Dendritic cell treated with granulocyte-macrophage colony-stimulating factor and Interleukin-4, amounts not matched to agents 40 ng/mL and 50 ng/mL, for 4 days (primary cell): ENCODE measurements at regions of chr3 and their contacts with region 1.

Region 1: DNA sequence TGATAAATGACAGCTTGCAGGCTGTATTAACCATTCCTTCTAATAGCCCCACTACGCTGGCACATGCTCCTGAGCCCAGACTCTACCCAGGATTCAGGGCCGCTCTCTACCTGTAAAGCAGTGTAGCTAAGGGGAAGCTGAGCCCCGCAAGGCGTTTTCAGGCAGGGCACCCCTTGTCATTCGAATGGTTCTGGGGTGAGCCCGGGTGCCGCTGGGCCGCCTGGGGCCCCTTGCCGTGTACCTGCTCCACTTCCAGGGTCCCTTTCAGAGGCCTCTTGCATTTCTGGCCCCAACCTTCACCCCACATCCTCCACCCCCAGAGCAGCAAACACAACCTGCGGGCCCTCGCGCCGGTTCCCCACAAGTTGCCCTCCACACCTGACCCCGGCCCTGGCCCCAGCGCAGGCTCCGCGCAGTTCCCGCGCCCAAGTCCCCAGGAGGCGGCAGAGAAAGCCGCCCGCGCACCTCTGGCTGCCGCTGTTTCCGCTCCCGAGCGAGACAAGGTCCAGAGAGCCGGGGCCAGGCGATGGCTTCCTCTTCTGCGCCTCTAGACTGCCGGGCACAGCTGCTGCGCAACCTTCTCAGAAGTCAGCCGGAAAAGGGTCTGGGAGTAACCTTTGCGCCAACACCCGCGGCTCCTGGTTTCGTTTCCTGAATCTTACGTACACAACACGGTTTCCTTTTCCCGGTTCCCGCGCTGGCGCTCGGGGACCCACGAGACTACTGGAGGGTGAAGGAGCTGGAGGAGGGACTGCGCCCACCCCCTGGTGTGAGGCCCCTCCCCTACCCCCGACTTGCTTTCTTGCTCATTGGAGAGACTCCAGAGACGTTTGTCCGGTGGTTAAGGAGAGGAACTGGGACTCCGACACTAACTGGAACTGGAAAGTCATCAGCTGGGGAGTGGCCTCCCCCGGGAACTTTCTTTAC is at the start of gene PLSCR1:
- H3K4me3 Mint-ChIP-seq: peak within 1 kb of the TSS; percentile 83
- H3K27ac Mint-ChIP-seq: peak within 1 kb of the TSS; percentile 95
- H3K4me1 Mint-ChIP-seq: peaks cover 44% of the 10 kb centered on the region
- H3K27me3 Mint-ChIP-seq: no peaks in the 10 kb centered on the region

Region 2: DNA sequence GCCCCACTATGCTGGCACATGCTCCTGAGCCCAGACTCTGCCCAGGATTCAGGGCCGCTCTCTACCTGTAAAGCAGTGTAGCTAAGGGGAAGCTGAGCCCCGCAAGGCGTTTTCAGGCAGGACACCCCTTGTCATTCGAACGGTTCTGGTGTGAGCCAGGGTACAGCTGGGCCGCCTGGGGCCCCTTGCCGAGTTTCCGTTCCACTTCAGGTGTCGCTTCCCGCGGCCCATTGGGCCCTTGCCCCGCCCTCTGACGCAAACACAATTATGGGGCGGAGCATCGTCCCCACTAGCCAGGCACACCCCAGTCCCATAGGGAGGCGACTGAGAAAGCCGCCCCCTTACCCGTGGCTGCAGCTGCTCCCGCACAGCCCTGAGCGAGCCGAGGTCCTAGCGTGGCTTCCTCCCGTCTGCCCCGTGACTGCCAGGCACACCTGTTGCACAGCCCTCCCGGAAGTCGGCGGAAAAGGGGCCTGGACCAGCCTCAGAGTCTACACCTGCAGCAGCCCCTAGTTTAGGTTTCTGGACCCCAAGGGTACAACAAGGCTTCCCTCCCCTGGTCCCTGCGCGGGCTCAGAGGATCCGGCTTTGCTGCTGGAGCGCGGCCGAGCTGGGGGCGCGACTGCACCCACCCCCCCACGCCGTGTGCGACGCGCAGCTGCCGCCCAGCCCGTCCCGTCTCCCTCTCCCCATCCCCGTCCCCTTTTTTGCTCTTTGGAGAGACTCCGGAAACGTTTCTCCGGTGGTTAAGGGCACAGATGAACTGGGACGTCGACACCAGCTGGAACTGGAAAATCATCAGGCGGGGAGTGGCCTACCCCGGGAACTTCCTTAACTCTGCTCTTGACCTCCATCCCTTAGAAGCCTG is 74.9 kb before region 1 on chr3 and contains the start of gene PLSCR2:
- intact Hi-C with region 1: loop called (anchors 2 kb)
- H3K4me3 Mint-ChIP-seq: peak within 1 kb of the TSS; percentile 89
- H3K27ac Mint-ChIP-seq: peak within 1 kb of the TSS; percentile 92
- H3K4me1 Mint-ChIP-seq: peaks cover 9% of the 10 kb centered on the region
- H3K27me3 Mint-ChIP-seq: peaks cover 3% of the 10 kb centered on the region

Region 3: DNA sequence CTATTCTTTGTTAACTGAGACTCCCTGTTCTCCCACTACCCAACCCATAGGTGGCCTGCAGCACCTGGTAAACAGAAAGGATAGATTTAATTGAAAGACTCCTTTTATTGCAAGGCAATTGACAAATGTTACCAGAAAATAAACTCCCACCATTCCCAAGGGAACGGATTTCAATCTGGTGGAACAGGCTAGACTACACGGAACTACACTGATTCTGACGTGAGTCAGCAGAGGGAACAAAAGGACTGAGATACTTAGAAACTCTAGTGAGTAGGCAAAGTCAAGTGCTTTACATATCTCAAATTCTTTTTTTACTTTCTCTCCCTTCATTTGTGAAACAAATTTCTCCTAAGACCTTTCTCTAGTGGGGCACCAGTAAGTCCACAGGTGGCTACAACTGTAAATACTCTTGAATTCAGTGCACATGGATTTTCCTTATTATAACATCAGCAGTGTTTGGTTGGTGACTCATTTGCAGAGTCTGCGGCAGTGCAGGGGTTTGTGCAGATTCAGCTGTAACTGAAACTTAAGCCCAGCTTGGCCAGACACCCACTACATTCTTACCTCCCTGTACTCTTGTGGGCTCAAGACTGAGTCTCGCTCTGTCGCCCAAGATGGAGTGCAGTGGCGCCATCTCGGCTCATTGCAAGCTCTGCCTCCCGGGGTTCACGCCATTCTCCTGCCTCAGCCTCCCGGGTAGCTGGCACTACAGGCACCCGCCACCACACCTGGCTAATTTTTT is 40.6 kb before region 1 on chr3:
- intact Hi-C with region 1: loop called (anchors 1 kb)
- H3K4me3 Mint-ChIP-seq: no peak overlapping the region
- H3K27ac Mint-ChIP-seq: peak overlapping the region; percentile 80
- H3K4me1 Mint-ChIP-seq: peaks cover 49% of the 10 kb centered on the region
- H3K27me3 Mint-ChIP-seq: no peaks in the 10 kb centered on the region

Region 4: GRCh38 chr3:146577662-146578061 is 33.4 kb after region 1 on chr3:
- intact Hi-C with region 1: no loop called
- H3K4me3 Mint-ChIP-seq: no peak overlapping the region
- H3K27ac Mint-ChIP-seq: no peak overlapping the region
- H3K4me1 Mint-ChIP-seq: peaks cover 8% of the 10 kb centered on the region
- H3K27me3 Mint-ChIP-seq: no peaks in the 10 kb centered on the region